Motor neuron (in vitro differentiated cells): ENCODE measurements at regions of chr2 and their contacts with region 1.

Region 1: GRCh38 chr2:191555092-191555742 is 122.7 kb upstream of the NABP1 start:
- ATAC-seq: peak; percentile 83 to 99 (median 90)
- H3K4me3 ChIP-seq: no peak overlapping the region
- H3K27ac ChIP-seq: no peak overlapping the region
- H3K4me1 ChIP-seq: no peaks in the 10 kb centered on the region

Region 2: GRCh38 chr2:191677646-191678436 is 122.6 kb after region 1 on chr2 and contains the start of gene NABP1:
- in situ Hi-C with region 1: loop called in 1 of 9 experiments (anchors 25 kb)
- ATAC-seq: peak; percentile 79 to 94 (median 91)
- H3K4me3 ChIP-seq: peak within 1 kb of the TSS; percentile 52 to 81 (median 57)
- H3K27ac ChIP-seq: peak within 1 kb of the TSS; percentile 65 to 69
- H3K4me1 ChIP-seq: no peaks in the 10 kb centered on the region
- total RNA-seq, gene NABP1: 3.0 to 217 (median 8.8) TPM

Region 3: GRCh38 chr2:191783416-191783815 is 228.2 kb after region 1 on chr2:
- in situ Hi-C with region 1: loop called in 1 of 9 experiments (anchors 25 kb)
- ATAC-seq: no peak
- H3K4me3 ChIP-seq: no peak overlapping the region
- H3K27ac ChIP-seq: no peak overlapping the region
- H3K4me1 ChIP-seq: no peaks in the 10 kb centered on the region

Region 4: DNA sequence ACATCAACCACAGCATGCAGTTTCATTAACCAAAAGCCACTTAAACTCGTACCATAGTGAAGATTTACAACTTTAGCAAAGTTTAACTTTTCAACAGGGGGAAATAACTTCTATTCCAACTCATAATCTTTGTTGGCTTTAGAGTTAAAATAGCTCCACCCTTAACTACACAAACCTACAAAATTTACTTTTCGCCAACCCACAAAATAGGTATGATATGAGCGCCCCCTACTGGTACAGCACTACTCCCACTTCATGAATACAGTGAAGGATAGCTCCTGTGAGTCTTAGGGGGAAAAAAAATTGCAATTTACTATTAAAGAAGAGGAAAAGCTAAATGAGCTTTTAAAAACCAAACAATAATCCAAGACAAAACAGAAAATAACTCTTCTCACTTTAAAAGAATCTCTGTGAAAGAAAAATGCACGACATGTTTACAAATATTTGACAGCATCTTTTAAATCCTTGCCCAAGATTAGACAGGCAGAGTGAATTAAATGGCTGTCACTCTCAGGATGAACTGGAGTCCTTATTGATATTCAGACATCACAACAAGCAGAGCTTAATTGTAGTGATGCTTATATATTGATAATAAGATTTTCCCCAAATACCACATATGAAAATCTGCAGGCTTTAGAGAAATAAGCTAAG is 607.3 kb after region 1 on chr2:
- in situ Hi-C with region 1: loop called in 7 of 9 experiments (anchors 25 kb)
- ATAC-seq: peak; percentile 39 to 86 (median 60)
- H3K4me3 ChIP-seq: no peak overlapping the region
- H3K27ac ChIP-seq: no peak overlapping the region
- H3K4me1 ChIP-seq: peaks cover 0 to 6% of the 10 kb centered on the region in 2 donors

Region 5: DNA sequence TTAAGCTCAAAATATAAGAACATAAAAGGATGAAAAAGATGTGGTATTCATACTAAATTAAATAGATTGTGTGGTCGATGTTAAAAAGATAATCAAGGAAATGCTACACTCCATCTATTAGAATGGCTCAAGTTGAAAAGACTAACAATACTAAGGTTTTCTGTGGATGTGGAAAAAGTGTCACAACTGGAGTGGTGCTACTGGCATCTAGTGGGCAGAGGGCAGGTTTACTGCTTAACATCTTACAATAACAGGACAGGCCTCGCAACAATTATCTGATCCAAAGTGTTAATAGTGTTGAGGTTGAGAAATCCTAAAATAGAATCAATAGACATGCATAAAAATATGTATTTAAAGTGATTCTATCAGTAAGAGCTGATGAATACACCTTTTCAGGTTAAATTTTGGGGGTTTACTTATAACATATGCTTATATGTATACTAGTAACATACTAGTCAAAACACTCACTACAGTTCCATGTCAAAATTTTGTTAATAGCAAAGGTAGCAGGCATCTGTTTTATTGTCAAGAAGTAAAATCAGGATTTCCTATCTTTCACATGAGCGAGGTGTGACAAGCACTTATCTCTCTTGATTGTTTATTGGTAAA is 731.0 kb after region 1 on chr2:
- in situ Hi-C with region 1: loop called in 1 of 9 experiments (anchors 25 kb)
- ATAC-seq: peak in 4 of 8 experiments; percentile 44 to 77 (median 62)
- H3K4me3 ChIP-seq: no peak overlapping the region
- H3K27ac ChIP-seq: no peak overlapping the region
- H3K4me1 ChIP-seq: peaks cover 3 to 21% of the 10 kb centered on the region in 2 donors